Natural killer cell (primary cell): ENCODE measurements at regions of chr3 and their contacts with region 1.

Region 1: DNA sequence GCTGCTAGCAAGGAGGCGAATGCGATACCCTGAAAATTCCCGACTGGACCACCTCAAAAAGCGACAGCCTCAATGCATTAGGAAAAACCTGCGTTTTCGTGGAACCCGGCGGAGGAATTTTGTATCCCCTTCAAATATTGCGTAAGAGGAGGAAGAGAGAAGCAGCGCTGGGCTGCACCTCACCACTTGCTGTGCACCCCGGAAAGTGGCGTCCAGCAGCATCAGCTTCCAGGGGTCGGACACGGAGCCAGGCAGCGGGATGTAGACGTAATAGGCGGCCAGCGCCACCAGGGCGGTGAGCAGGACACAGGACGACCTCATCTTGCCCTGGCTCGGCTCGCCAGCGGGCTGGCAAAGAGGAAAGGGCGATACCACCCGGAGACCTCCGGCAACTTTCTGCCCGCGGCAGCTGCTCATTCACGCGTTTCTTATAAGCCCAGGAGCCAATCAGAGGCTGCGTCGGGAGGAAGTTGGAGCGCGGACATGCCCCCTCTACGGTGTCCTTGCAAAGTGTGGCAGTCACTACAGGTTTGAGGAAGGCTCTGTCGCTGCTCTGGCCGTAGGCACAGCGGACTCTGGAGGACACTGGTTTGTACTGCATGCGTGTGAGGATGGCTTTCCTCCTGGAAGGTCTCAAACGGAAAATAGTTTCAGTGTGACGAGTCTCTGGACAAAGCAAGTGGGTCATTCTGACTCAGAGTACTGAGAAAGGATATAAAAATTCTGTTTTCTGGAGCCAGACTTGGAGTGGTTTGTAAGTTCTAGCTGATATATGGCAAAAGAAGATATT is at the start of gene NCEH1:
- DNase-seq: peak; percentile 59 to 84
- ATAC-seq: peak; percentile 97 to 98 (median 97)
- H3K4me3 ChIP-seq: peak within 1 kb of the TSS; percentile 87
- H3K4me3 Mint-ChIP-seq: peak within 1 kb of the TSS; percentile 96
- H3K27ac ChIP-seq: peak within 1 kb of the TSS; percentile 60
- H3K27ac Mint-ChIP-seq: peak within 1 kb of the TSS; percentile 66 to 89
- H3K4me1 ChIP-seq: peaks cover 10% of the 10 kb centered on the region
- H3K4me1 Mint-ChIP-seq: peaks cover 28 to 30% of the 10 kb centered on the region in 2 donors
- H3K27me3 ChIP-seq: no peaks in the 10 kb centered on the region
- H3K27me3 Mint-ChIP-seq: no peaks in the 10 kb centered on the region
- CTCF ChIP-seq: peak; percentile 61
- total RNA-seq, gene NCEH1: 3.5 to 6.8 (median 5.3) TPM

Region 2: DNA sequence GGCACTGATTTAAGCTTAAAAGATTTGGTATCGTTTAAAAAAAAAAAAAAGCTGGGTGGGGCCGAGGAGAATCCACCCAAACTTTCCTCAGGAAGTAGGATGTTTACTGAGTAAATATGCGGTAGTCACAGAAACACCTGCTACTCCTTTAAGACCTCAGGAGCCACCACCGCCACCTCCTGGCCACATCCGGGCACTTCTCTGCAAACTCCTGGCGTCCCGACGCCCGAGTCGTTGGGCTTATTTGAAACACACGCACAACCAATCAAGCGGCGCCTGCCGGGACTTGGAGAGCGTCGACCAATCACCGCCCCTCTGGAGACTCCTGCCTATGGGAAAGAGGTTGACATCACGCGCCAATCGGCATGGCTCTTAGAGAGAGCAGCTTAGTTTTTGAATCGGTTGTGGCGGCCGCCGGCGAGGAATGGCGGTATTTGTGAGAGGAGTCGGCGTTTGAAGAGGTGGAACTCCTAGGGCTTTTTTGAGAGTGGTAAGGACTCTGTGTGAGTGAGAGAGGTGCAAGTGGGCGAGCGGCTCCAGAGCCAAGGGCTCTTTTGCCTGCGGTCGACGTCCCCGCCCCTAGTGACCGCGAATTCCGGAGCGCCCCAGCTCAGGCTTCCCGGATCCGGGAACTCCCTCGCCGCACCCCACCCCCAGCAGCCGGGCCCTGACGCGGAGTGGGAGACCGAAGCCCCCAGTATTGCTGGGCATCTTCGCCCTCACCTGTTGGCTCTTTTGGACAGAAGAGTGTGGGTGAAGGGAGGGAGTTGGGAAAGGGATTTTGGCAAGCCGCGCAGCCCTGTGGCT is 39.7 kb after region 1 on chr3 and contains the start of gene ECT2:
- intact Hi-C with region 1: loop called (anchors 2 kb)
- DNase-seq: peak; percentile 93 to 99
- ATAC-seq: peak; percentile 97 to 100 (median 98)
- H3K4me3 ChIP-seq: peak within 1 kb of the TSS; percentile 86
- H3K4me3 Mint-ChIP-seq: peak within 1 kb of the TSS; percentile 99
- H3K27ac ChIP-seq: peak within 1 kb of the TSS; percentile 71
- H3K27ac Mint-ChIP-seq: peak within 1 kb of the TSS; percentile 84 to 87
- H3K4me1 ChIP-seq: peaks cover 11% of the 10 kb centered on the region
- H3K4me1 Mint-ChIP-seq: peaks cover 19 to 21% of the 10 kb centered on the region in 2 donors
- H3K27me3 ChIP-seq: no peaks in the 10 kb centered on the region
- H3K27me3 Mint-ChIP-seq: peaks cover 0 to 3% of the 10 kb centered on the region in 2 donors
- CTCF ChIP-seq: peak; percentile 58
- total RNA-seq, gene ECT2: 2.9 to 7.0 (median 4.8) TPM

Region 3: GRCh38 chr3:172776049-172776717 is 65.3 kb after region 1 on chr3:
- intact Hi-C with region 1: no loop called
- DNase-seq: no peak
- ATAC-seq: no peak
- H3K4me3 ChIP-seq: no peak overlapping the region
- H3K4me3 Mint-ChIP-seq: no peak overlapping the region
- H3K27ac ChIP-seq: no peak overlapping the region
- H3K27ac Mint-ChIP-seq: no peak overlapping the region
- H3K4me1 ChIP-seq: no peaks in the 10 kb centered on the region
- H3K4me1 Mint-ChIP-seq: no peaks in the 10 kb centered on the region
- H3K27me3 ChIP-seq: no peaks in the 10 kb centered on the region
- H3K27me3 Mint-ChIP-seq: no peaks in the 10 kb centered on the region
- CTCF ChIP-seq: no peak